Left lung (tissue), 14 donors: ENCODE measurements at regions of chr9 and their contacts with region 1.

Region 1: GRCh38 chr9:71249729-71250317 is 128.4 kb upstream of the TRPM3 start:
- DNase-seq: peak in 2 of 4 donors; percentile 37 to 60
- ATAC-seq: peak; percentile 89
- H3K4me3 ChIP-seq: no peak overlapping the region
- H3K27ac ChIP-seq: no peak overlapping the region
- H3K4me1 ChIP-seq: no peaks in the 10 kb centered on the region
- H3K27me3 ChIP-seq: no peaks in the 10 kb centered on the region
- CTCF ChIP-seq: peak; percentile 25 to 52

Region 2: GRCh38 chr9:70639853-70640814 is 609.7 kb before region 1 on chr9:
- intact Hi-C with region 1: loop called in 1 of 2 experiments (anchors 5 kb)
- DNase-seq: peak in 2 of 4 donors; percentile 44 to 57
- ATAC-seq: peak; percentile 86
- H3K4me3 ChIP-seq: no peak overlapping the region
- H3K27ac ChIP-seq: no peak overlapping the region
- H3K4me1 ChIP-seq: no peaks in the 10 kb centered on the region
- H3K27me3 ChIP-seq: no peaks in the 10 kb centered on the region
- CTCF ChIP-seq: peak; percentile 34 to 53

Region 3: DNA sequence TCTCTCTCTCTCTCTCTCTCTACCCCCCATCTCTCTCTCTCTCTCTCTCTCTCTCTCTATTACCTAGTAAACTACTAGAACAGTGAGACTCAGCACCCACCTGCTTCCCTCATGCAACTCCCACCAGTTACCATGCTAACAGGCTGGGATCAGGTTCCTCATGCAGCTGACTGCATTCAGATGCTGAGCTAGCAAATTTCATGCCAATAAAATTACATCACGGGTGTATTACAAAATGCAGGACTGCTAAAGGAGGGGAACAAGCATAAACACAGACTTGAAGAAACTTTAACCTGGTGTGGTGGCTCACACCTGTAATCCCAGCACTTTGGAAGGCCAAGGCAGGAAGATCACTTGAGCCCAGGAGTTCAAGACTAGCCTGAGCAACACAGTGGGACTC is 442.5 kb after region 1 on chr9:
- intact Hi-C with region 1: no loop called
- DNase-seq: peak in 2 of 4 donors; percentile 53 to 69
- ATAC-seq: peak; percentile 65
- H3K4me3 ChIP-seq: no peak overlapping the region
- H3K27ac ChIP-seq: peak overlapping the region in 1 of 2 donors; percentile 70
- H3K4me1 ChIP-seq: peaks cover 0 to 35% of the 10 kb centered on the region in 2 donors
- H3K27me3 ChIP-seq: no peaks in the 10 kb centered on the region
- CTCF ChIP-seq: no peak